Sigmoid colon (tissue), 7 donors: ENCODE measurements at regions of chr13 and their contacts with region 1.

Region 1: GRCh38 chr13:41263261-41264027 is at the start of gene MTRF1:
- DNase-seq: peak; percentile 85
- H3K4me3 ChIP-seq: peak within 1 kb of the TSS; percentile 44 to 65 (median 64)
- H3K27ac ChIP-seq: peak within 1 kb of the TSS; percentile 62 to 85 (median 84)
- H3K4me1 ChIP-seq: peaks cover 0 to 8% (median 5%) of the 10 kb centered on the region in 4 donors
- H3K27me3 ChIP-seq: no peaks in the 10 kb centered on the region
- CTCF ChIP-seq: no peak
- EP300 ChIP-seq: no peak
- POLR2A ChIP-seq: no peak
- total RNA-seq, gene MTRF1: 12.5 to 19.9 (median 15.0) TPM

Region 2: GRCh38 chr13:40130871-40131636 is 1132.4 kb before region 1 on chr13:
- intact Hi-C with region 1: no loop called
- DNase-seq: no peak
- H3K4me3 ChIP-seq: no peak overlapping the region
- H3K27ac ChIP-seq: no peak overlapping the region
- H3K4me1 ChIP-seq: no peaks in the 10 kb centered on the region
- H3K27me3 ChIP-seq: no peaks in the 10 kb centered on the region
- CTCF ChIP-seq: no peak
- EP300 ChIP-seq: no peak
- POLR2A ChIP-seq: no peak

Region 3: GRCh38 chr13:41132512-41133152 is 130.8 kb before region 1 on chr13 and contains the start of gene KBTBD6:
- intact Hi-C with region 1: loop called (anchors 1 kb)
- DNase-seq: peak; percentile 97
- H3K4me3 ChIP-seq: peak within 1 kb of the TSS; percentile 66 to 85 (median 78)
- H3K27ac ChIP-seq: peak within 1 kb of the TSS; percentile 90 to 93 (median 91)
- H3K4me1 ChIP-seq: peaks cover 0 to 43% (median 32%) of the 10 kb centered on the region in 4 donors
- H3K27me3 ChIP-seq: no peaks in the 10 kb centered on the region
- CTCF ChIP-seq: no peak
- EP300 ChIP-seq: peak in 1 of 4 donors; percentile 54
- POLR2A ChIP-seq: peak; percentile 38 to 59
- total RNA-seq, gene KBTBD6: 6.7 to 10.7 (median 9.9) TPM

Region 4: DNA sequence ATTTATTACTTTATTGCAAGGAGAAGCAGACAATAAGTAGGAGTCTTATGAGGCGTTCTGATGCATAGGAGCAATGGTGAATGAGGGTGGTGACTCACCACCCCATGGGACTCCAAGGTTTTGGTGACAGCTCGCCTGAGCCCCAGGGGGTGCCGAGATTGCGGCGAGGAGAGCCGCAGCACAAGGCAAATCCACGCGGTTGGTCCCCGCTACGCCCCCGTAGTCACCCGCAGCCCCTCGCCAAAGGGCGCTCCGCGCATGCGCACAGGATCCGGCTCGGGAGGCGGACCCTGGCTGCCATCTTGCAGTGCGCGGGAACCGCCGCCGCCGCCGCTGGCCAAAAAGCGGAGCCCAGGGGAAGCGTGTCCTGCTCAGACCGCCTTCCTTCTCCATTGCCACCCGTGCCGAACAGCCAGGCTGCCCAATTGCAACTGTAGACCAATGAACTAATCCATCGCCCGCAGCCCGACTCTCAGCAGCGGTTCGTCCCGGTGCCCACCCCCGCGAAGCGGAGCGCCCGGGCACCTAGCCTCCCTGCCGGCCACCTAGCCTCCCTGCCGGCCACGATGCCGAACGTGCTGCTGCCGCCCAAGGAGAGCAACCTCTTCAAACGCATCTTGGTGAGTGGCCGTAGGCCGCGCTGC is 47.6 kb after region 1 on chr13 and contains the start of gene NAA16:
- intact Hi-C with region 1: loop called (anchors 1 kb)
- DNase-seq: peak; percentile 95
- H3K4me3 ChIP-seq: peak within 1 kb of the TSS; percentile 72 to 98 (median 87)
- H3K27ac ChIP-seq: peak within 1 kb of the TSS; percentile 93 to 96 (median 94)
- H3K4me1 ChIP-seq: peaks cover 0 to 46% (median 28%) of the 10 kb centered on the region in 4 donors
- H3K27me3 ChIP-seq: no peaks in the 10 kb centered on the region
- CTCF ChIP-seq: peak in 2 of 4 experiments; percentile 16
- EP300 ChIP-seq: no peak
- POLR2A ChIP-seq: peak; percentile 51 to 67
- total RNA-seq, gene NAA16: 15.2 to 24.4 (median 18.1) TPM